IMR-90 (cell line): ENCODE measurements at regions of chr1 and their contacts with region 1.

Region 1: GRCh38 chr1:59076612-59077011 is 220.3 kb upstream of the FGGY start:
- DNase-seq: peak; percentile 34
- ATAC-seq: peak; percentile 76
- H3K4me3 ChIP-seq: no peak overlapping the region
- H3K27ac ChIP-seq: no peak overlapping the region
- H3K4me1 ChIP-seq: peaks cover 4% of the 10 kb centered on the region
- H3K27me3 ChIP-seq: no peaks in the 10 kb centered on the region
- CTCF ChIP-seq: peak; percentile 41; the same call in 1 of the 2 replicates
- POLR2A ChIP-seq: no peak
- RAD21 ChIP-seq: peak; percentile 47

Region 2: DNA sequence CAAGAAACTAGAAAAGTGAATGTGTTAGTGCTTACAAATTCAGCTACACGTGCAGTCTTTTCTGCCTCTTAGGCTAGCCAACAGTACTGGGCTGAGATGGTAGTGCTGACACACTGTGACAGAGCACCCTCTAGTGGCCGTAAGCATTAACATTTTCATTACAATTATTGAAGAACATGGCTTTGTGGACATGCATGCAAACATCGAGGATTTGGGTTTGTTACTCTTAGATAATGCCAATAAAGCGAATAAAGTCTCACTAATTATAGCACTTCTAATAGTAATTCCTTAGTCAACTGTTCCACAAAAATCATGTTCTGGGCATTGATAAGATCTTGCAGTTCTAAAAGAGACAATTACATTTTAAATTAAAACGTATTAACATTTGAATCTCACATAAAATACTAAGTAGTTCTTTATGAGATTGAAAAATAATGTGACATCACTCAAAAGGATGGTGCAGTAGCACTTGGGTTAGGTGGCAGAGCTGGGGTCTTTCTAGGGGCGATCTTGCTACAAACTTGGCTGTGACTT is 423.9 kb before region 1 on chr1:
- CTCF ChIA-PET with region 1: no interaction called
- POLR2A ChIA-PET with region 1: no interaction called
- dilution Hi-C with region 1: no loop called
- in situ Hi-C with region 1: no loop called
- intact Hi-C with region 1: no loop called
- DNase-seq: peak; percentile 84
- ATAC-seq: peak; percentile 94
- H3K4me3 ChIP-seq: no peak overlapping the region
- H3K27ac ChIP-seq: no peak overlapping the region
- H3K4me1 ChIP-seq: no peaks in the 10 kb centered on the region
- H3K27me3 ChIP-seq: no peaks in the 10 kb centered on the region
- CTCF ChIP-seq: peak; percentile 92
- POLR2A ChIP-seq: no peak
- RAD21 ChIP-seq: peak; percentile 94

Region 3: DNA sequence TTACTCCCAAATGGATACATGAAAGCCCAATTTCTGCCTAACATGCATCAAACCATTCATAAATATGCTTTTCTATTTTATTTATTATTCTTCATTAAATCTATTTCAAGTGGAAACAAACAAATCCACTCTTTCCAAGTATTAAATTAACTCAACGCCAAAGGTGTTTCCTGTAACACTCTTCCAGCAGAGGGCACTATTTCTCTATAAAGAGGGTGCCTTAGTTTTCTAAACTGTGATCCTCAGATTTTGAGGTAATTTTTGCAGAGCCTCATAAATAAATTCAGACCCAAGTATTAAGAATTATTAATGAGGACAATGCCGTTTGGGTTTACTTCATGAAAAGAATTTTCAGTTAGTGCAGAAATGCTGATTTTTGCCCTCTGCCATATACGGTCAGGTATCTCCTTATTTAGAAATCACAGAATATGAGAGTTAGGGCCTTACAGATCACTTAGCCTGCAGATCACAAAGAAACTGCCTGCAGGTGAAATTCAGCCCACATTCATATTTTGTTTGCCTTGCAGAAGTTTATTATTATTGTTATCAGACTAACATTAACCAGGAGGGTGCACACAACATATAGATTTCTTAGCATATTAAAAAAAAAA is 336.7 kb before region 1 on chr1:
- CTCF ChIA-PET with region 1: no interaction called
- POLR2A ChIA-PET with region 1: no interaction called
- dilution Hi-C with region 1: no loop called
- in situ Hi-C with region 1: no loop called
- intact Hi-C with region 1: loop called (anchors 1 kb)
- DNase-seq: peak; percentile 71
- ATAC-seq: peak; percentile 64; the same call in 1 of the 2 replicates
- H3K4me3 ChIP-seq: no peak overlapping the region
- H3K27ac ChIP-seq: no peak overlapping the region
- H3K4me1 ChIP-seq: no peaks in the 10 kb centered on the region
- H3K27me3 ChIP-seq: no peaks in the 10 kb centered on the region
- CTCF ChIP-seq: peak; percentile 93
- POLR2A ChIP-seq: no peak
- RAD21 ChIP-seq: peak; percentile 94

Region 4: GRCh38 chr1:58823481-58824010 is 253.1 kb before region 1 on chr1:
- CTCF ChIA-PET with region 1: no interaction called
- POLR2A ChIA-PET with region 1: no interaction called
- dilution Hi-C with region 1: no loop called
- in situ Hi-C with region 1: no loop called
- intact Hi-C with region 1: no loop called
- DNase-seq: peak; percentile 95
- ATAC-seq: peak; percentile 92
- H3K4me3 ChIP-seq: no peak overlapping the region
- H3K27ac ChIP-seq: peak overlapping the region; percentile 65; the same call in 1 of the 2 replicates
- H3K4me1 ChIP-seq: peaks cover 9% of the 10 kb centered on the region
- H3K27me3 ChIP-seq: no peaks in the 10 kb centered on the region
- CTCF ChIP-seq: no peak
- POLR2A ChIP-seq: no peak
- RAD21 ChIP-seq: peak; percentile 36

Region 5: GRCh38 chr1:59296358-59297256 is 220.0 kb after region 1 on chr1 and contains the start of gene FGGY:
- CTCF ChIA-PET with region 1: no interaction called
- POLR2A ChIA-PET with region 1: no interaction called
- dilution Hi-C with region 1: no loop called
- in situ Hi-C with region 1: no loop called
- intact Hi-C with region 1: loop called (anchors 10 kb)
- DNase-seq: peak; percentile 98
- ATAC-seq: peak; percentile 93
- H3K4me3 ChIP-seq: peak within 1 kb of the TSS; percentile 74
- H3K27ac ChIP-seq: peak within 1 kb of the TSS; percentile 99
- H3K4me1 ChIP-seq: peaks cover 6% of the 10 kb centered on the region
- H3K27me3 ChIP-seq: no peaks in the 10 kb centered on the region
- CTCF ChIP-seq: no peak
- POLR2A ChIP-seq: peak; percentile 84
- RAD21 ChIP-seq: peak; percentile 29; the same call in 1 of the 2 replicates
- total RNA-seq, gene FGGY: 12.8 and 14.0 TPM in 2 replicates